ENCODE measurements at regions of chr18 and their contacts with region 1.

Region 1: GRCh38 chr18:54946149-54946581 is 13.1 kb downstream of the CCDC68 start:
- DNase-seq: peak; percentile 17 to 86
- H3K4me3 ChIP-seq: peak overlapping the region; percentile 62
- H3K27ac ChIP-seq: peak overlapping the region; percentile 79
- H3K4me1 ChIP-seq: peaks cover 44% of the 10 kb centered on the region
- H3K27me3 ChIP-seq: no peaks in the 10 kb centered on the region
- CTCF ChIP-seq: no peak

Region 2: GRCh38 chr18:54405290-54405689 is 540.9 kb before region 1 on chr18:
- CTCF ChIA-PET with region 1: no interaction called
- POLR2A ChIA-PET with region 1: no interaction called
- intact Hi-C with region 1: no loop called
- DNase-seq: no peak
- H3K4me3 ChIP-seq: no peak overlapping the region
- H3K27ac ChIP-seq: no peak overlapping the region
- H3K4me1 ChIP-seq: no peaks in the 10 kb centered on the region
- H3K27me3 ChIP-seq: no peaks in the 10 kb centered on the region
- CTCF ChIP-seq: no peak

Region 3: GRCh38 chr18:54928236-54928635 is 17.9 kb before region 1 on chr18:
- CTCF ChIA-PET with region 1: interaction called, 5 read pairs
- POLR2A ChIA-PET with region 1: interaction called, 10 read pairs
- intact Hi-C with region 1: no loop called
- DNase-seq: no peak
- H3K4me3 ChIP-seq: no peak overlapping the region
- H3K27ac ChIP-seq: no peak overlapping the region
- H3K4me1 ChIP-seq: no peaks in the 10 kb centered on the region
- H3K27me3 ChIP-seq: no peaks in the 10 kb centered on the region
- CTCF ChIP-seq: no peak

Measured in PC-9 (cell line).